ENCODE measurements at regions of chr13 and their contacts with region 1.

Region 1: GRCh38 chr13:30739761-30740642 is 4.7 kb downstream of the ALOX5AP start:
- DNase-seq: peak; percentile 78
- H3K4me3 Mint-ChIP-seq: peak overlapping the region; percentile 76
- H3K27ac Mint-ChIP-seq: peak overlapping the region; percentile 91
- H3K4me1 Mint-ChIP-seq: peaks cover 79% of the 10 kb centered on the region
- H3K27me3 Mint-ChIP-seq: no peaks in the 10 kb centered on the region

Region 2: DNA sequence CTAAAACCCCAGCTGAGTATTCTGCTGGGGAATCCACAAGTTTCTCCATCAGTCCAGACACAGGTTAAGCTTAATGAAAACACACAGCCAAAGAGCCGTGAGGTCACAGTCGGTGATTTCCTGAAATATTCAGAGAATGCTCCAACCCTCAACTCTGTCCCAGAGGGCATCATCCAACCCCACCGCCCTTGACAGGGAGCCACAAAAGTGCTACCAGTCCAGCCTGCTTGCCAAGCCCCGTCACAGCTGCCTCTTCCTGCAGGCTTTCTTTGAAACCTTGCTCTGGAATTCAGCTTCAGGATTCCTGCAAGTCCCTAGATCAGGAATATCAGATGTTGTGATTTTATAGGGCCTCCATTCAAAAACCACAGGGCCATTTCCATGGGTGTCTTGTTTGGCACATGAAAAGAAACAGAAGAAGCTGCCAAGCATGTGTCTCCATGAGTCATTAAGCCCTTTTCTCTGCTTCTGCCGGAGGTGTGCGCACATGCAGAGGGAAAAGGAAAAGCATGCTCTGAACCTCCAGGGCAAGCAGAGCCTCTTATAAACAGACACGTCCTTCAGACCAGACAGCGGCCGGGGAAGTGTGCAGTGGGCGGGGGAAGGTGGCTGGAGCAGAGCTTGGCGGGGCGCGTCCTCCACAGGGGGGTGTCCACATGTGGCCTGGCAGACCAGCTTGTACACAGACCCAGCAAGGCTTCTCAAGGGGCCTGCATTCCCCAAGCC is 597.4 kb before region 1 on chr13:
- intact Hi-C with region 1: loop called (anchors 1 kb)
- DNase-seq: no peak
- H3K4me3 Mint-ChIP-seq: no peak overlapping the region
- H3K27ac Mint-ChIP-seq: peak overlapping the region; percentile 79
- H3K4me1 Mint-ChIP-seq: peaks cover 49% of the 10 kb centered on the region
- H3K27me3 Mint-ChIP-seq: peaks cover 3% of the 10 kb centered on the region

Region 3: GRCh38 chr13:30465585-30466357 is 274.2 kb before region 1 on chr13 and contains the start of gene HMGB1:
- intact Hi-C with region 1: loop called (anchors 1 kb)
- DNase-seq: peak; percentile 98
- H3K4me3 Mint-ChIP-seq: peak within 1 kb of the TSS; percentile 94
- H3K27ac Mint-ChIP-seq: peak within 1 kb of the TSS; percentile 100
- H3K4me1 Mint-ChIP-seq: peaks cover 26% of the 10 kb centered on the region
- H3K27me3 Mint-ChIP-seq: no peaks in the 10 kb centered on the region
- total RNA-seq, gene HMGB1: 594 and 603 TPM in 2 replicates

Region 4: GRCh38 chr13:30654430-30654829 is 85.6 kb before region 1 on chr13:
- intact Hi-C with region 1: loop called (anchors 1 kb)
- DNase-seq: peak; percentile 56
- H3K4me3 Mint-ChIP-seq: peak overlapping the region; percentile 59
- H3K27ac Mint-ChIP-seq: peak overlapping the region; percentile 76
- H3K4me1 Mint-ChIP-seq: peaks cover 36% of the 10 kb centered on the region
- H3K27me3 Mint-ChIP-seq: no peaks in the 10 kb centered on the region

Region 5: GRCh38 chr13:30720172-30720869 is 19.7 kb before region 1 on chr13:
- intact Hi-C with region 1: loop called (anchors 2 kb)
- DNase-seq: no peak
- H3K4me3 Mint-ChIP-seq: no peak overlapping the region
- H3K27ac Mint-ChIP-seq: no peak overlapping the region
- H3K4me1 Mint-ChIP-seq: peaks cover 24% of the 10 kb centered on the region
- H3K27me3 Mint-ChIP-seq: peaks cover 7% of the 10 kb centered on the region

Region 6: DNA sequence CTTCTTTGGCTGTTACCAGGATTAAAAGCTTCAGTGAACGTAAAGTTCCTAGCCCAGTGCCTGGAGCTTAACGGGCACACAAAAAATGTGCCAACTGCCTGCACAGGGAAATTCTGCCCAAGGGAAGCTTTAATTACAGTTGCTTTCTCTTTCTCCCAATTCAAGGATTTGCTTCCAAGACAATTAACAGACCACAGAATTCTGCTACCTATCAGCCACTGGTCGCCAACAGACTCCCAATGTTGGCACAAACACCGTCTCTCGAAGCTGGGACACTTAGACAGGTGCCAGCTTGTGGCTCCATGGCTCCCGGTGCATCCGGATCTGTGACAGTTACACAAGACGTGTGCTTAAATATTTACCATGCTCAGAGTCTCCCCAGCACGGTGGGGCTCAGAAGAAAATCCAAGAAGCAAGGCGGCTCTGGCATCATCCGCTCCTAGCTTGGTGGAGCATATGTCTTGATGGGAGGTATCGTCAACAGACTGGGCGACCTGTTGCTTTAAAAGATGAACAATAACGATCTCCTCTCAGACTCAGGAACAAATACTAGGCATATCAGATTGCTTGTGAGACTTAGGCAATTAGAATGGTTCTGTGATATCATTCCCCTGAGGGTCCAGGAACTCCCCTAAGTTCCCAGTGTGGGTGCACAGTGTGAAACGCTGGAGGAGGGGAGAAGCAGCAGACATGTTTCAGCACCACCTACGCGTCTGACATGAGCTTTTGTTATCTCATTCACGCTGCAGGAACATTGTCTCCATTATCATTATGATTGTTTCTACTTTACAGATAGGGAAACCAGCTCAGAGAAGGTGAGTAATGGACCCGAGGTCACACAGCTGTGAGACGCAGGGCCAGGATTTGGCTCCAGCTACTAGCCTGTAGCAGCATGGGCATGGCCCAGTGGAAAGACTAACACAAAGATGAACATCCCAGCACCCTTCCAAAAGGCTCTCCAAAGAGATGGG is 56.9 kb after region 1 on chr13:
- intact Hi-C with region 1: loop called (anchors 1 kb)
- DNase-seq: no peak
- H3K4me3 Mint-ChIP-seq: peak overlapping the region; percentile 58
- H3K27ac Mint-ChIP-seq: peak overlapping the region; percentile 78
- H3K4me1 Mint-ChIP-seq: peaks cover 30% of the 10 kb centered on the region
- H3K27me3 Mint-ChIP-seq: no peaks in the 10 kb centered on the region

Region 7: GRCh38 chr13:31274390-31274789 is 534.4 kb after region 1 on chr13:
- intact Hi-C with region 1: no loop called
- DNase-seq: no peak
- H3K4me3 Mint-ChIP-seq: no peak overlapping the region
- H3K27ac Mint-ChIP-seq: no peak overlapping the region
- H3K4me1 Mint-ChIP-seq: peaks cover 1% of the 10 kb centered on the region
- H3K27me3 Mint-ChIP-seq: no peaks in the 10 kb centered on the region

Region 8: DNA sequence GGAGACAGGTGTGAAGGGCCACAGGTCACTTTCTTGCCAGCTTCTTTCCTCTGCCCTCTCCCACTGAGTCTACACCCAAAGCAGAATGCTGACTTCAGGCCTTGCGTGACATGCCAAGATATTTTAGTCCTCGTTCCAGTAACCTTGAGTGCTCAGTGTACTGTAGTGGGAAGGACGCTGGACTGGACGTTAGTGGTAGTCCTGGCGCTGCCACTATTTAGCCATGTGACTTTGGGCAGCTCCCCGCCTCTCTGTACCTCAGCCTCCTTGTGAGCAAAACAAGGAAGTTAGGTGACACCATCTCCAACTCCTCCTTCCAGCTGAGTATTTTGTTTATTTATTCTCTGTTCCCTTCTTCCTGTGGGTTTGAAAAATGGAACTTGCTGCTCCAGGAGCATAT is 1377.7 kb after region 1 on chr13:
- intact Hi-C with region 1: loop called (anchors 5 kb)
- DNase-seq: no peak
- H3K4me3 Mint-ChIP-seq: no peak overlapping the region
- H3K27ac Mint-ChIP-seq: no peak overlapping the region
- H3K4me1 Mint-ChIP-seq: peaks cover 40% of the 10 kb centered on the region
- H3K27me3 Mint-ChIP-seq: no peaks in the 10 kb centered on the region

Region 9: DNA sequence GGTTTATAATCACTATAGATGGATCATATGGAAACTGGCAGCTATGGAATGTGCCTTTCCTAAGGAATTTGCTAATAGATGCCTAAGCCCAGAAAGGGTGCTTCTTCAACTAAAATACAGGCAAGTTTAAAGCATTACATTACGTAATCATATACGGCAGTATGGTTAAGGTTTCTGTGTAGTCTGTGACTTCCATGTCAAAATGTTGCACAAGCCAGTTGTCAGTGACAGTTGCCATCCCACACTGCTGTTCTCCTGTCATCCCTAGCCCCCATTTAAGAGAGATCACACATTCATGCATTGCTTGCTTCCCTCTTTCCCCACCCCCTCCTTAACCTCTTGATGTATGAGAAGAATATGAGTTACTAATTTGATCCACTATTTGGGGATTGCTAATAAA is 1622.6 kb after region 1 on chr13:
- intact Hi-C with region 1: no loop called
- DNase-seq: no peak
- H3K4me3 Mint-ChIP-seq: no peak overlapping the region
- H3K27ac Mint-ChIP-seq: no peak overlapping the region
- H3K4me1 Mint-ChIP-seq: no peaks in the 10 kb centered on the region
- H3K27me3 Mint-ChIP-seq: no peaks in the 10 kb centered on the region